B cell (primary cell): ENCODE measurements at regions of chr1 and their contacts with region 1.

Region 1: DNA sequence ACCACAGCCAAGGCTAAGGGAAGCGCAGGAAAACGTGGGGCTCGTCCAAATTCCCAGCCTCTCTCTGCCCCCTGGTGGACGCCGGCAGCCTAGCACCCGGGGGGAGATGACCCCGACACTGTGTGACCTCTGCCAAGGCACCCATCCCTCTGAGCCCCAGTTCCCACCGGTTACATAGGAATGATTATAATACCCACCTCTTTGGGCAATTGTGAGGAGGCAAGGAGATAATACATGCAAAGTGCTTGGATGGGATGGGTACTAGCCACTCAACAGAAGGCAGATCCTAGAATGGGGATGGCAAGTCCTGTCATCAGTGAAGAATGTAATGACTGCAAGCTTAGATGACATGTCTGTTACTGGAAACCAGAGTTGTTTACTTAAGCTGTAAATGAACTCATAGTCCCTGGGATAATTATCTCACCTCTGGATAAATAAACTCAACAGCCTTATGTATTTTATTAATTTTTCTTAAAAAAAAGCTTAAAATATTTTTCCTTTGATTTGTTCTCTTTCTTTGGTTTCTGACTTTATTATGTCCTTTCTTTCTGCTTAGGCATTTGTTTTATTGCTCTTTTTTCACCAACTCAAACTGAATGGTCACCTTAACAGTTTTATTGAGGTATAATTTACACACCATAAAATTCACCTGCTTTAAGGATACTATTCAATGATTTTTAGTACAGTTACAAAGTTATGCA is 11.3 kb upstream of the BMP8B start:
- DNase-seq: peak; percentile 74
- ATAC-seq: peak; percentile 69
- H3K4me3 ChIP-seq: peak overlapping the region in 4 of 5 experiments; percentile 25 to 49 (median 42)
- H3K4me3 Mint-ChIP-seq: peak overlapping the region; percentile 82
- H3K27ac ChIP-seq: peak overlapping the region; percentile 81 to 89
- H3K27ac Mint-ChIP-seq: peak overlapping the region; percentile 97
- H3K4me1 ChIP-seq: peaks cover 6 to 14% of the 10 kb centered on the region in 2 donors
- H3K4me1 Mint-ChIP-seq: peaks cover 9% of the 10 kb centered on the region
- H3K27me3 ChIP-seq: no peaks in the 10 kb centered on the region
- H3K27me3 Mint-ChIP-seq: no peaks in the 10 kb centered on the region
- CTCF ChIP-seq: peak; percentile 92

Region 2: DNA sequence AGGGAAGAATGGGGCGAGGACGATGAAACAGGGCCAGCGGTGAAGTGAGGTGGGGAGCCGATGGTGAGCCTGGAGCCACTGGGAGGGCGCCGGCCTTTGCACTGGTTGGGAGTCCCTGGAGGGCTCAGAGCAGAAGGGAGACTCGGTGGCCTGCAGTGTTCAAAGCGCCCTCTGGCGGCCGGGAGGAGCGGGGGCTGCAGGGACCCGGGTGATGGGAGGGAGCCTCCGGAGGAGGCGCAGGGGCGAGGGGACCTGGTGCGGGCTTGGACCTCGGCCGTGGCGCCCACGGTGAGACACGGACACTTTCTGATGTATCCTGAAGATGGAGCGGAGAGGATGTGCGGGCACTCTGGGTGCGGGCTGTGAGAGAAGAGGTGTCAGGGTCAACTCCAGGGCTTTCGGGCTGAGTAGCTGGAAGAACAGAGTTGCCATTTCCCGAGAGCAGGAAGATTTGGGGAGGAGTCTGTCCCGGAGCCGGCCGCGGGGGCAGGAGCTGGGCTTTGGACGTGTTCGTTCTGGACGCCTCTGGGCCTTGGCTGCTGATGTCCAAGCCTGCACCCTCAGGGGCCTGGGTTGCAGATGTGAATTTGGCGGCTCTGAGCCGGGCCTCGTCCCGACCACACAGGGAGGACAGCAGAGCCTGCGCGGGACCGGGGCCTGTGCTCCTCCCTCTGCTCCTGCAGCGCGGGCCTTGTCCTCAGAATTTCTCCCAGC is 190.1 kb before region 1 on chr1:
- CTCF ChIA-PET with region 1: interaction called, 35 read pairs
- POLR2A ChIA-PET with region 1: no interaction called
- intact Hi-C with region 1: no loop called
- DNase-seq: peak; percentile 79
- ATAC-seq: peak; percentile 72
- H3K4me3 ChIP-seq: no peak overlapping the region
- H3K4me3 Mint-ChIP-seq: no peak overlapping the region
- H3K27ac ChIP-seq: no peak overlapping the region
- H3K27ac Mint-ChIP-seq: no peak overlapping the region
- H3K4me1 ChIP-seq: peaks cover 0 to 10% of the 10 kb centered on the region in 2 donors
- H3K4me1 Mint-ChIP-seq: peaks cover 10% of the 10 kb centered on the region
- H3K27me3 ChIP-seq: peaks cover 0 to 8% (median 0%) of the 10 kb centered on the region in 4 experiments
- H3K27me3 Mint-ChIP-seq: peaks cover 11% of the 10 kb centered on the region
- CTCF ChIP-seq: peak; percentile 76

Region 3: DNA sequence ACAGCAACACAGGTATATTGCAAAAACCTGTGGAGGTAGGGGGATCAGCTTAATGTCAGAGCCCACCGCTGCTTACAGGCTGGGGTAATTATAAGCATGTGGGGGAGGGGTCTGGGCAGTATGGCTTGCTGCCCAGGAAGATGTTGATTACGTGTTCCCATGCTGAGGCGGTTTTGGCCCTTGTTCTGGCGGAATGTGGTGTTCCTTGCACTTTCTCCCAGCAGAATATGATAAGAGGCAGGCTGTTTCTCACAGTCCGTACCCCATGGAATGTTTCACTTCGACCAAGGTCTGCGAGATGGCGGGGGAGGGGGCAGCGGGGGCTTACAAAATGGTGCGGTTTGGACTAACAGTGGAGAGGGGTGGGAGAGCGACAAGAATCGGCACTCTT is 98.9 kb before region 1 on chr1:
- CTCF ChIA-PET with region 1: interaction called, 19 read pairs
- POLR2A ChIA-PET with region 1: no interaction called
- intact Hi-C with region 1: loop called (anchors 1 kb)
- DNase-seq: no peak
- ATAC-seq: no peak
- H3K4me3 ChIP-seq: no peak overlapping the region
- H3K4me3 Mint-ChIP-seq: no peak overlapping the region
- H3K27ac ChIP-seq: no peak overlapping the region
- H3K27ac Mint-ChIP-seq: no peak overlapping the region
- H3K4me1 ChIP-seq: no peaks in the 10 kb centered on the region
- H3K4me1 Mint-ChIP-seq: no peaks in the 10 kb centered on the region
- H3K27me3 ChIP-seq: peaks cover 0 to 9% (median 3%) of the 10 kb centered on the region in 4 experiments
- H3K27me3 Mint-ChIP-seq: peaks cover 32% of the 10 kb centered on the region
- CTCF ChIP-seq: no peak

Region 4: DNA sequence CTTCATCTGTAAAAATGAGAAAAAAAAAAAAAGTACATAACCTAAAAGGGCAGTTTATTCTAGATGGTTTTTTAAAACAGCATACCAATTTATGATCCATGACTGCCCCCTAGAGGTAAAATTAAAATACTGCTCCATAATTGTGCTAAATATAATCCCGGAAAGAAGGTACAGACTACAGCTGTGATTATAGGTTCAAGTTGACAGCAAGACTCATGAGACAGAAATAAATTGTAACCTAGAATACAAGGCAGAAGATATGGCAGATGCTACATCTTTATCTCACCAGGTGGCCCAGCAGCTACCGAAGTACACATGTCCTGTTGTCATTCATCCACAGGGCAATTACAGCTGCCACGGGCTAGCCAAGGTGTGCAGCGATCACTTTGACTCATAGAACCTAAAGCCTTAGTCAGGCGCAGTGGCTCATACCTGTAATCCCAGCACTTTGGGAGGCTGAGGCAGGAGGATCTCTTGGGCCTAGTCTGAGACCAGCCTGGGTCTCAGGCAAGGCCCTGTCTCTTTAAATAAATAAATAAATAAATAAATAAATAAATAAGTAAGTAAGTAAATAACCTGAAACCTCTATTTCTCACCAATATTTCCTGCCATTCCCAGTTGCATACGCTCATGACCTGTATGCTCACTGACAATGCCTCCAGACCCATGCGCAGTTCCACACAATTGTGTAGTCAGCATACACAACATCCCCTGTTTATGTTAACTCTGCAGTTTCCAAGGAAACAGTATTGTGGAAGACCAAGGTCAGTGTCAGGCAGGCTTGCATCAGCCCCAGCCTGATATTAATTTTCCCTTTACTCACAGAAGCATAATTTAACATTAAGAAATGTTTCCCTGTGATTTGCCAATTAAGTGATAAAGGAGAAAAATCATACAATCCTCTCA is 79.6 kb before region 1 on chr1:
- CTCF ChIA-PET with region 1: interaction called, 8 read pairs
- POLR2A ChIA-PET with region 1: no interaction called
- intact Hi-C with region 1: loop called (anchors 10 kb)
- DNase-seq: peak; percentile 76
- ATAC-seq: peak; percentile 65
- H3K4me3 ChIP-seq: no peak overlapping the region
- H3K4me3 Mint-ChIP-seq: no peak overlapping the region
- H3K27ac ChIP-seq: no peak overlapping the region
- H3K27ac Mint-ChIP-seq: no peak overlapping the region
- H3K4me1 ChIP-seq: no peaks in the 10 kb centered on the region
- H3K4me1 Mint-ChIP-seq: no peaks in the 10 kb centered on the region
- H3K27me3 ChIP-seq: peaks cover 0 to 13% (median 8%) of the 10 kb centered on the region in 4 experiments
- H3K27me3 Mint-ChIP-seq: peaks cover 39% of the 10 kb centered on the region
- CTCF ChIP-seq: peak; percentile 90

Region 5: GRCh38 chr1:39788758-39789570 is 11.0 kb before region 1 on chr1 and contains the start of gene BMP8B:
- CTCF ChIA-PET with region 1: interaction called, 10 read pairs
- POLR2A ChIA-PET with region 1: interaction called, 16 read pairs
- intact Hi-C with region 1: loop called (anchors 1 kb)
- DNase-seq: peak; percentile 77
- ATAC-seq: peak; percentile 86
- H3K4me3 ChIP-seq: peak within 1 kb of the TSS in 4 of 5 experiments; percentile 29 to 65 (median 54)
- H3K4me3 Mint-ChIP-seq: peak within 1 kb of the TSS; percentile 87
- H3K27ac ChIP-seq: no peak within 1 kb of the TSS
- H3K27ac Mint-ChIP-seq: peak within 1 kb of the TSS; percentile 86
- H3K4me1 ChIP-seq: peaks cover 5 to 7% of the 10 kb centered on the region in 2 donors
- H3K4me1 Mint-ChIP-seq: peaks cover 26% of the 10 kb centered on the region
- H3K27me3 ChIP-seq: peaks cover 0 to 16% (median 0%) of the 10 kb centered on the region in 4 experiments
- H3K27me3 Mint-ChIP-seq: peaks cover 15% of the 10 kb centered on the region
- CTCF ChIP-seq: no peak
- total RNA-seq, gene BMP8B: 2.3 and 2.5 TPM in 2 replicates

Region 6: GRCh38 chr1:39816415-39817090 is 16.6 kb after region 1 on chr1:
- CTCF ChIA-PET with region 1: interaction called, 3 read pairs
- POLR2A ChIA-PET with region 1: interaction called, 7 read pairs
- intact Hi-C with region 1: loop called (anchors 1 kb)
- DNase-seq: peak; percentile 80
- ATAC-seq: peak; percentile 61
- H3K4me3 ChIP-seq: peak overlapping the region in 4 of 5 experiments; percentile 25 to 45 (median 28)
- H3K4me3 Mint-ChIP-seq: peak overlapping the region; percentile 78
- H3K27ac ChIP-seq: no peak overlapping the region
- H3K27ac Mint-ChIP-seq: peak overlapping the region; percentile 38
- H3K4me1 ChIP-seq: peaks cover 6 to 15% of the 10 kb centered on the region in 2 donors
- H3K4me1 Mint-ChIP-seq: peaks cover 10% of the 10 kb centered on the region
- H3K27me3 ChIP-seq: no peaks in the 10 kb centered on the region
- H3K27me3 Mint-ChIP-seq: no peaks in the 10 kb centered on the region
- CTCF ChIP-seq: peak; percentile 78

Region 7: DNA sequence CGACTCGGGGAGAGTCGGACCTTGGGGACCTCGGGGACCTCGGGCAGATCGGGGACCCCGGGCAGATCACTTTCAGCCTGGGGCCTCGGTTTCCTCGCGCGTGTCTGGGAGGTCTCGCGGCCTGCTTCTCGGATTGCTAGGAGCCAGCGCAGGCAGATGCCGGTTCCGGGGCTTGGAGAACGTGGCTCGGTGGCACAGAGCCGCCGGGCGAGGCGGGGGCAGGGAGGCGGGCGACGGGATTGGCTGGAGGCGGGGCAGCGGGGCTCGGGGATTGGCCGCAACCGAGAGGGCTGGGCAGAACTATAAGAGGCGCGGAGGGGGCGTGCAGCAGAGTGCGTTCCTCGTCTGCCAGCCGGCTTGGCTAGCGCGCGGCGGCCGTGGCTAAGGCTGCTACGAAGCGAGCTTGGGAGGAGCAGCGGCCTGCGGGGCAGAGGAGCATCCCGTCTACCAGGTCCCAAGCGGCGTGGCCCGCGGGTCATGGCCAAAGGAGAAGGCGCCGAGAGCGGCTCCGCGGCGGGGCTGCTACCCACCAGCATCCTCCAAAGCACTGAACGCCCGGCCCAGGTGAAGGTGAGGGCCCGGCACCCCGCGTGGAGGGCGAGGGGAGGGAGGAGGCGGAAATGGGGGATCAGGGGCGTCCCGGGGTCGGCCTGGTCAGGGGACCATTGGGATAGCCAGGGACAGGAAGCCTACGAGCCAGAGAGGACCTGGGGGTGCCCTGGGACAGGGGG is 155.1 kb after region 1 on chr1 and contains the start of gene MFSD2A:
- CTCF ChIA-PET with region 1: interaction called, 3 read pairs
- POLR2A ChIA-PET with region 1: interaction called, 10 read pairs
- intact Hi-C with region 1: no loop called
- DNase-seq: peak; percentile 91
- ATAC-seq: peak; percentile 98
- H3K4me3 ChIP-seq: peak within 1 kb of the TSS; percentile 45 to 94 (median 67)
- H3K4me3 Mint-ChIP-seq: peak within 1 kb of the TSS; percentile 90
- H3K27ac ChIP-seq: peak within 1 kb of the TSS; percentile 27 to 48
- H3K27ac Mint-ChIP-seq: peak within 1 kb of the TSS; percentile 84
- H3K4me1 ChIP-seq: peaks cover 15 to 30% of the 10 kb centered on the region in 2 donors
- H3K4me1 Mint-ChIP-seq: peaks cover 37% of the 10 kb centered on the region
- H3K27me3 ChIP-seq: no peaks in the 10 kb centered on the region
- H3K27me3 Mint-ChIP-seq: peaks cover under 1% of the 10 kb centered on the region
- CTCF ChIP-seq: no peak
- total RNA-seq, gene MFSD2A: 3.9 TPM in 2 replicates